Caco-2 (cell line): ENCODE measurements at regions of chr12 and their contacts with region 1.

Region 1: GRCh38 chr12:38884666-38885065 is 20.7 kb downstream of the CPNE8 start:
- DNase-seq: no peak
- H3K4me3 ChIP-seq: no peak overlapping the region
- H3K4me3 Mint-ChIP-seq: no peak overlapping the region
- H3K27ac Mint-ChIP-seq: no peak overlapping the region
- H3K4me1 ChIP-seq: peaks cover 25% of the 10 kb centered on the region
- H3K4me1 Mint-ChIP-seq: peaks cover 33% of the 10 kb centered on the region
- H3K27me3 ChIP-seq: no peaks in the 10 kb centered on the region
- H3K27me3 Mint-ChIP-seq: no peaks in the 10 kb centered on the region
- CTCF ChIP-seq: no peak

Region 2: GRCh38 chr12:38149395-38150286 is 735.0 kb before region 1 on chr12:
- CTCF ChIA-PET with region 1: no interaction called
- POLR2A ChIA-PET with region 1: interaction called, 14 read pairs
- intact Hi-C with region 1: no loop called
- DNase-seq: no peak
- H3K4me3 ChIP-seq: no peak overlapping the region
- H3K4me3 Mint-ChIP-seq: no peak overlapping the region
- H3K27ac Mint-ChIP-seq: no peak overlapping the region
- H3K4me1 ChIP-seq: no peaks in the 10 kb centered on the region
- H3K4me1 Mint-ChIP-seq: no peaks in the 10 kb centered on the region
- H3K27me3 ChIP-seq: no peaks in the 10 kb centered on the region
- H3K27me3 Mint-ChIP-seq: no peaks in the 10 kb centered on the region
- CTCF ChIP-seq: no peak

Region 3: DNA sequence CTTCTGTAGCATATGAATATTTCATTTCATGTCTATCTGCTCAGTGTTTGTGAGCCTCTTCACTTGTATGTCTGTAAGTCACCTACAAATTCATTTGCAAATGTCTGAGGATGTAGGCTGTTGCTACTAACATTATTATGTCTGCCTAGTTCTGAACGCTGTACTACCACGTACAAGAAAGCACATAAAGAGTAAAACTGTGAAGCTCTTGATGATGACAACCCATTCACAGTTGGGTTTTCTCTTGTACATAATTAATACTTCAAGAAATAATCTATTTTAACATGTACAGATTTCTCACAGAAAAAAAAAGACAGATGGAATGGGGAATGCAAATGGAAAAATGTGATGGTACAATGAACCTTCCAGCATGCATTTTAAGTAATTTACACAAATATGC is 85.0 kb after region 1 on chr12:
- CTCF ChIA-PET with region 1: no interaction called
- POLR2A ChIA-PET with region 1: no interaction called
- intact Hi-C with region 1: no loop called
- DNase-seq: no peak
- H3K4me3 ChIP-seq: no peak overlapping the region
- H3K4me3 Mint-ChIP-seq: no peak overlapping the region
- H3K27ac Mint-ChIP-seq: no peak overlapping the region
- H3K4me1 ChIP-seq: no peaks in the 10 kb centered on the region
- H3K4me1 Mint-ChIP-seq: no peaks in the 10 kb centered on the region
- H3K27me3 ChIP-seq: no peaks in the 10 kb centered on the region
- H3K27me3 Mint-ChIP-seq: peaks cover 10% of the 10 kb centered on the region
- CTCF ChIP-seq: no peak